ENCODE measurements at regions of chr10 and their contacts with region 1.

Region 1: GRCh38 chr10:68067029-68067428 is 8.1 kb downstream of the HERC4 start:
- DNase-seq: no peak
- ATAC-seq: no peak
- H3K4me3 ChIP-seq: no peak overlapping the region
- H3K4me3 Mint-ChIP-seq: no peak overlapping the region
- H3K27ac ChIP-seq: no peak overlapping the region
- H3K27ac Mint-ChIP-seq: peak overlapping the region in 2 of 9 donors; percentile 11 to 36
- H3K4me1 ChIP-seq: peaks cover 0 to 4% of the 10 kb centered on the region in 2 donors
- H3K4me1 Mint-ChIP-seq: peaks cover 27 to 54% (median 47%) of the 10 kb centered on the region in 7 donors
- H3K27me3 ChIP-seq: no peaks in the 10 kb centered on the region
- H3K27me3 Mint-ChIP-seq: no peaks in the 10 kb centered on the region

Region 2: GRCh38 chr10:67925449-67926005 is 141.5 kb before region 1 on chr10:
- CTCF ChIA-PET with region 1: no interaction called
- POLR2A ChIA-PET with region 1: no interaction called
- intact Hi-C with region 1: no loop called
- DNase-seq: no peak
- ATAC-seq: no peak
- H3K4me3 ChIP-seq: no peak overlapping the region
- H3K4me3 Mint-ChIP-seq: no peak overlapping the region
- H3K27ac ChIP-seq: no peak overlapping the region
- H3K27ac Mint-ChIP-seq: no peak overlapping the region
- H3K4me1 ChIP-seq: no peaks in the 10 kb centered on the region
- H3K4me1 Mint-ChIP-seq: no peaks in the 10 kb centered on the region
- H3K27me3 ChIP-seq: no peaks in the 10 kb centered on the region
- H3K27me3 Mint-ChIP-seq: no peaks in the 10 kb centered on the region

Region 3: DNA sequence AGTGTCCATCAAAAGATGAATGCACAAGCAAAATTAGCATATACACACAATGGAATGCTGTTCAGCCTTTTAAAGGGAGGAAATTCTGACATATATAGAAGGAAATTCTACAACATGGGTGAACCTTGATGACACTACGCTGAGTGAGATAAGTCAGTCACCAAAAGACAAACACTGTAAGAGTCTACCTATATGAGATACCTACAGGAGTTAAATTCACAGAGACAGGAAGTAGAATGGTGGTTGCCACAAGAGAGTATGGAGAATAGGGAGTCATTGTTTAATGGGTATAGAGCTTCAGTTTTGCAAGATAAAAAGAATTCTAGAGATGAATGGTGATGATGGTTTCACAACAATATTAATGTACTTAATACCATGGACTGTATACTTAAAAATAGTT is 43.7 kb before region 1 on chr10:
- CTCF ChIA-PET with region 1: no interaction called
- POLR2A ChIA-PET with region 1: no interaction called
- intact Hi-C with region 1: loop called in 1 of 2 experiments (anchors 5 kb)
- DNase-seq: no peak
- ATAC-seq: no peak
- H3K4me3 ChIP-seq: no peak overlapping the region
- H3K4me3 Mint-ChIP-seq: no peak overlapping the region
- H3K27ac ChIP-seq: no peak overlapping the region
- H3K27ac Mint-ChIP-seq: peak overlapping the region in 1 of 9 donors; percentile 49
- H3K4me1 ChIP-seq: no peaks in the 10 kb centered on the region
- H3K4me1 Mint-ChIP-seq: peaks cover 0 to 19% (median 8%) of the 10 kb centered on the region in 7 donors
- H3K27me3 ChIP-seq: no peaks in the 10 kb centered on the region
- H3K27me3 Mint-ChIP-seq: no peaks in the 10 kb centered on the region

Region 4: GRCh38 chr10:68305854-68306253 is 238.8 kb after region 1 on chr10:
- CTCF ChIA-PET with region 1: no interaction called
- POLR2A ChIA-PET with region 1: no interaction called
- intact Hi-C with region 1: no loop called
- DNase-seq: no peak
- ATAC-seq: no peak
- H3K4me3 ChIP-seq: no peak overlapping the region
- H3K4me3 Mint-ChIP-seq: no peak overlapping the region
- H3K27ac ChIP-seq: no peak overlapping the region
- H3K27ac Mint-ChIP-seq: no peak overlapping the region
- H3K4me1 ChIP-seq: no peaks in the 10 kb centered on the region
- H3K4me1 Mint-ChIP-seq: peaks cover 0 to 4% (median 0%) of the 10 kb centered on the region in 7 donors
- H3K27me3 ChIP-seq: no peaks in the 10 kb centered on the region
- H3K27me3 Mint-ChIP-seq: no peaks in the 10 kb centered on the region